Aorta (tissue), 5 donors: ENCODE measurements at regions of chr3 and their contacts with region 1.

Region 1: GRCh38 chr3:64685800-64686445 is 1.9 kb downstream of the ADAMTS9 start:
- DNase-seq: peak; percentile 93 to 96
- ATAC-seq: peak; percentile 93
- H3K4me3 ChIP-seq: peak overlapping the region; percentile 76 to 88
- H3K27ac ChIP-seq: peak overlapping the region; percentile 84 to 97
- H3K4me1 ChIP-seq: peaks cover 0 to 13% of the 10 kb centered on the region in 2 donors
- H3K27me3 ChIP-seq: no peaks in the 10 kb centered on the region

Region 2: DNA sequence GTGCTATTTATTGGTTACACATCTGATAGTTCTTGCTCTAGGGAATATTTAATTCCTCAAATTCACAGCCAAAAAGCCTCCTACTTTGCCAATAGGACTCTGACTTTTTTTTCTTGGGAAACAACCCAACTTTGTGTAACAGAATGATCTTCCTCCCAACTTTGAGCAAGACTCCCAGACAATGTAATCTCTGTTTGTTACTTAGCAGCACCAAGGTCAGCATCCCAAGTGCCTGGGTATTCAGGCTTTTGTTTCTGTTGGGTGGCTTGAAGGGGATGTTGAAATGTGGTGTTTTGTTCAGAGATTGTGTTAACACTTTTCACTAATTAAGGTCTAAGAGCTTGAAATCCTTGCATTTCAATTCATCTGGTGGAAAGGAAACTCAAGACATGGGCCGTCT is 113.9 kb before region 1 on chr3:
- intact Hi-C with region 1: no loop called
- DNase-seq: no peak
- ATAC-seq: no peak
- H3K4me3 ChIP-seq: no peak overlapping the region
- H3K27ac ChIP-seq: no peak overlapping the region
- H3K4me1 ChIP-seq: no peaks in the 10 kb centered on the region
- H3K27me3 ChIP-seq: no peaks in the 10 kb centered on the region

Region 3: DNA sequence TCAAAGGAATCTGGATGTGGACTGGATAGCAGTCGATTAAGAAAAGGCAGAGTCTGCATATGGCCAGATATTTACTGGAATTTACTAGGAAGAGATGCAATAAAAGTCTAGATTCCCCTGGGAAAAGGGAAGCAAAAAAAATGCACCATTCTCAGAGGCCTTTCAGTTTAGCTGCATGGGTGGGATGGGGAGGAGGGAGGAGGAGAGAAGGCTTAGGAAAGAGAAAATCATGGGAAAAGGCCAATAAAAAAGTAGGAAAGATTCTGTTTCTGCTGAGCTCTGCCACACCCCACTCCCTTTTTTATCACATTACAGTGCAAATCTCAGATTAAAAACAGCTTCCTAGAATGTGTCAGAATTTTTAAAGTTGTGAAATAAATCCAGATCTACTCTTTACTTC is 101.7 kb before region 1 on chr3:
- intact Hi-C with region 1: no loop called
- DNase-seq: no peak
- ATAC-seq: no peak
- H3K4me3 ChIP-seq: no peak overlapping the region
- H3K27ac ChIP-seq: no peak overlapping the region
- H3K4me1 ChIP-seq: no peaks in the 10 kb centered on the region
- H3K27me3 ChIP-seq: no peaks in the 10 kb centered on the region

Region 4: GRCh38 chr3:64739971-64740631 is 54.2 kb after region 1 on chr3:
- intact Hi-C with region 1: loop called (anchors 2 to 5 kb)
- DNase-seq: no peak
- ATAC-seq: peak; percentile 51
- H3K4me3 ChIP-seq: no peak overlapping the region
- H3K27ac ChIP-seq: peak overlapping the region; percentile 53 to 79
- H3K4me1 ChIP-seq: peaks cover 5 to 10% of the 10 kb centered on the region in 2 donors
- H3K27me3 ChIP-seq: no peaks in the 10 kb centered on the region

Region 5: GRCh38 chr3:64824394-64824909 is 138.5 kb after region 1 on chr3:
- intact Hi-C with region 1: loop called (anchors 5 to 10 kb)
- DNase-seq: no peak
- ATAC-seq: no peak
- H3K4me3 ChIP-seq: no peak overlapping the region
- H3K27ac ChIP-seq: no peak overlapping the region
- H3K4me1 ChIP-seq: peaks cover 4 to 10% of the 10 kb centered on the region in 2 donors
- H3K27me3 ChIP-seq: no peaks in the 10 kb centered on the region

Region 6: DNA sequence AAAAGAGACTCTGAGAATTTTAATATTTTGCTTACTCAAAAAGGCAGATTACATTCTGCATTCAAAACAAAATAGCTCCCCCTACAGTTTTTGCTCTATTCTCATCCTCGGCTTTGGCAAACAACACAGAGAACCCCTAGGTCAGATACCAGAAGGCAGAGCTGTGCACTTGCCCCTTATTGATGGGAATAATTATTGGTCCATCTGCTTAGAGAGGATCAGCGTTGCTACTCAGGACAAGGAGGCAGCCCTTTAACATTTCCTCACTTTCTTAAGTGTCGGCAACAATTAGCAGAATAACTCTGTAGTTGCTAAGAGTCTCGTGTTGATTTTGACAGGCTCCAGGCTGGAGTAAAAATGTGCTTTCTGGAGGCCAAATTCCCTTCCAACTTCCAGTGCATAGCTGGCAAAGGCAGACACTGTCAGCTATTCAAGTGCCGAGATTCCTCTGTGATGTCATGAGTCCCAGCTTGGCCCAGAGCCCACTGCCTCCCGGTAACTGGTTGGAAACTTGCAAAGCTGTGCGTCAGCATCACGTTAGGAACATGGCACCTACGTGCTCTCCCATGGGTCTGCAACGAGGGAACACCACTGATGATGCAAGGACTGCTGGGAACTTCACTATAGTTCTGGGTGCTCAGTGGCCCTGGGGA is 484.6 kb after region 1 on chr3:
- intact Hi-C with region 1: loop called in 1 of 2 experiments (anchors 5 kb)
- DNase-seq: peak; percentile 94 to 97
- ATAC-seq: peak; percentile 91
- H3K4me3 ChIP-seq: no peak overlapping the region
- H3K27ac ChIP-seq: peak overlapping the region in 1 of 2 donors; percentile 67
- H3K4me1 ChIP-seq: no peaks in the 10 kb centered on the region
- H3K27me3 ChIP-seq: no peaks in the 10 kb centered on the region